ENCODE measurements at regions of chr17 and their contacts with region 1.

Region 1: GRCh38 chr17:52202164-52203080 is 43.9 kb upstream of the CA10 start:
- DNase-seq: no peak
- H3K4me3 ChIP-seq: no peak overlapping the region
- H3K27ac ChIP-seq: no peak overlapping the region
- H3K4me1 ChIP-seq: no peaks in the 10 kb centered on the region
- H3K27me3 ChIP-seq: no peaks in the 10 kb centered on the region
- CTCF ChIP-seq: no peak
- POLR2A ChIP-seq: no peak

Region 2: GRCh38 chr17:52041123-52041617 is 161.3 kb before region 1 on chr17:
- intact Hi-C with region 1: loop called (anchors 5 kb)
- DNase-seq: no peak
- H3K4me3 ChIP-seq: no peak overlapping the region
- H3K27ac ChIP-seq: no peak overlapping the region
- H3K4me1 ChIP-seq: no peaks in the 10 kb centered on the region
- H3K27me3 ChIP-seq: no peaks in the 10 kb centered on the region
- CTCF ChIP-seq: no peak
- POLR2A ChIP-seq: no peak